ENCODE measurements at regions of chr5 and their contacts with region 1.

Region 1: DNA sequence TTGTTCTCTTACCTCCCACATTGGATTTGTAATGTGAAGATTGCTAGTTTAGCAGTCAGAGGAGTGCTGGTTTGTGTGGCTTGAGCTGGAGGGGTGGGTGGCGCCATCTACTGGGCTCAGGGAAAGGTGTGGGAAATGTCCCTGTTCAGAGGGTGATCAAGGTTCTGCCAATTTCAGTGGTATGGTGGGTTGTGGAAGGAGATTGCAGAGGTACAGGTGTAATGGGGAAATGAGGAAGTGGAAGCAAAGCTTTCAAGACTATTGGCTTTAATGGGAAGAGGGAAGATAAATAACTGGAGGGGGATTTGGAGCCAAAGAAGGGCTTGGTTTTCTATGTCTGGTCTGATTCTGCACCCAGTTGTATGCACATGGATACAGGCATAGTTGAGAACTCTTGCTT is 76.4 kb downstream of the OSMR start:
- DNase-seq: no peak
- ATAC-seq: no peak

Region 2: DNA sequence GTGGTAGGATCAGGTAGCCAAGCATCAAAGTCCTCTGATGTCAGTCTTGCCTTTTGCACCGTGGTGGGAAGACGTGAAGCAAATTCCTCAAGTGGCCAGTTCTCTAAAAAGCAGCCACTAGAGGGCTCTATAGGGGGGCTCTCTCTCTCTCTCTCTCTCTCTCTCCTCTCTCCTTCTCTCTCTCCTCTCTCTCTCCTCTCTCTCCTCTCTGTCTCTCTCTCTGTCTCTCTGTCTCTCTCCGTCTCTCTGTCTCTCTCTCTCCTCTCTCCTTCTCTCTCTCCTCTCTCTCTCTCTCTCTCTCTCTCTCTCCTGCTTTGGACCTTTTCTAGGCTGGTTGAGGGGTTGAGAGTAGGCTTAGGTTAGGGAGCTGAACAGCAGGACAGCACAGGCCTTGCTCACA is 90.3 kb before region 1 on chr5:
- intact Hi-C with region 1: loop called (anchors 5 kb)
- DNase-seq: no peak
- ATAC-seq: no peak

Region 3: DNA sequence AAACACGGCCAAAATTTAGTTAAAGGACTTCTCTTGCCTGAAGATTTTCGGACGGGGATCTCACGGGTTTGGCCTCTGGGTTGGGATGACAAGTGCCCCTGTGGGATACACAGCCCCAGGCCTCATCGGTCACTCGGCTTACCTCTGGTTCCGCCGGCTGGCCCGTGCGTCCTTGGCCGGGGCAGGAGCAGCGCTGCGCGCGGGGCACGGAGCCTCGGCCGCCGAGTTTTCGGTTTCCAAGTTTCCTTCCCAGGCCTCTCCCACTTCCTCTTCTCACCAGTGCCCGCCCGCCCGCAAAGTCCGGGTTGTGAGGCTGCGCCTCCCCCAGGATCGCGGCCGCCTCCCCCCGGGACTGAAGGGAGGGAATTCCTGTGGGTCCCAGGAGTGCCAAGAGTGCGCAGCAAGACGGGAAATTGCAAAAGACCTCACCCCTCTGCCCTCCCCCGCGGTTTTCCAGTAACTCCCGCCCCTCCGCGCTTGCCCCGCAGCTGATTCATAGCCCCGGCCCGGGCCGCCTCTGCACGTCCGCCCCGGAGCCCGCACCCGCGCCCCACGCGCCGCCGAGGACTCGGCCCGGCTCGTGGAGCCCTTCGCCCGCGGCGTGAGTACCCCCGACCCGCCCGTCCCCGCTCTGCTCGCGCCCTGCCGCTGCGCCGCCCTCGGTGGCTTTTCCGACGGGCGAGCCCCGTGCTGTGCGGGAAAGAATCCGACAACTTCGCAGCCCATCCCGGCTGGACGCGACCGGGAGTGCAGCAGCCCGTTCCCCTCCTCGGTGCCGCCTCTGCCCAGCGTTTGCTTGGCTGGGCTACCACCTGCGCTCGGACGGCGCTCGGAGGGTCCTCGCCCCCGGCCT is 76.4 kb before region 1 on chr5 and contains the start of gene OSMR:
- intact Hi-C with region 1: loop called (anchors 5 kb)
- DNase-seq: peak; percentile 93
- ATAC-seq: peak; percentile 97
- total RNA-seq, gene OSMR: 14.1 TPM

Region 4: GRCh38 chr5:38968665-38969064 is 46.5 kb after region 1 on chr5:
- intact Hi-C with region 1: no loop called
- DNase-seq: no peak
- ATAC-seq: no peak

Region 5: DNA sequence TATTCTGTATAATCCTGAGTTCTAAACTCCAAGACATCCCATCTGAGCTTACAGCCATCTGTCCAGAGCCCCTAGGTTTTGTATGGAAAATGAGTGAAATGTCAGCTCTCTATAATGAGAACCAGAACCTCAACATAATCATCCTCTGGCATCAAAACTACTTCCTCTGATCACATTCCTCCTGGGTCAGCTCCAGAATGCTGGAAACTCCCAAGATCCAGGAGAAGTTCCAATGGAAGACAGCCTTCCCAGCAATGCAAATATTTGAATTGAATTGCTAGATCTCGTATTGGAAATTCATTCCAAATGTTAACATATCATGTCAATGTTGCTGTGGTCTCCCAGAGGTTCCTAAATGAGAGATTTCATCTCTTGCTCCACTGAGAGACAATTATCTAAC is 418.3 kb after region 1 on chr5:
- intact Hi-C with region 1: no loop called
- DNase-seq: no peak
- ATAC-seq: no peak

Measured in Right ventricle myocardium inferior (tissue), 1 donor.